ENCODE measurements at regions of chr10 and their contacts with region 1.

Region 1: DNA sequence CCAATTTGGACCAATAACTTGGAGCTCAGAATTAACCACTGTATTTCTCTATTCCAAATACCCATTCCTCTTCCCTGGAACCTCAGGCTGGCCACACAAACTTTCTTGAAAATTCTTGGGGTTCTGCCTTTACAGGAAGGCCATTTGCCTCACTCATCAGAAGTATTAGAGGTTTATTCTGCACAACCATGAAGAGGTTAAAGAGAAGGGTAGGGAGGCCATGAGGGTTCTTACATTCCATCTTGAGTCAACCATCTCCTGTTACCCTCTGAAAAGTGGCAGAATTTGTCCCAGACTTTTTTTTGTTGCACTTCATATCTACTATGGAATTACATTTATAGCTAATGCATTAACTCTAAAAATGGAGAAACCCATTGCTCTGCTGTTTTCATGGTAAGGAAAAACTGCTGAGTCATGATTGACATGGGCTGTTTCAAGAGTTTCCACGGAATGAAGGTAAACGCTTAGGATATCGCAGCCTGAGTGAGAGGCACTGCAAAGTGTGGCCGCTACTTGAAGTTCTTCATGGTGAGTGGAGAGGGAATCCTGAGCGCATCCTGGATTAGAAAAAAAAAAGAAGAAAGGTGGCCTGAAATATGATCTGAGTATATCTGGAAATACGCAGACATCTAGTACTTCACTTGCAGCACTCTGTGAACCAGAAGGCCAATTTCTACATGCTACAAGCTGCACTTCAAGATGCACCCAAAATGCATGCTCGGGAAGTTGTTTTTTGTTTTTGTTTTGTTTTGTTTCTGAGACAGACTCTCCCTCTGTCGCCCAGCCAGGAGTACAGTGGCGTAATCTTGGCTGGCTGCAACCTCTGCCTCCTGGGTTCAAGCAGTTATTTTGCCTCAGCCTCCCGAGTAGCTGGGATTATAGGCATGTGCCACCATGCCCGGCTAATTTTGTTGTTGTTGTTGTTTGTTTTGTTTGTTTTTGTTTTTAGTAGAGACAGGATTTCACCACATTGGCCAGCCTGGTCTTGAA is 83.7 kb downstream of the KIAA1217 start:
- DNase-seq: no peak
- ATAC-seq: no peak
- H3K4me3 ChIP-seq: no peak overlapping the region
- H3K27ac ChIP-seq: peak overlapping the region in 8 of 10 donors; percentile 34 to 73 (median 69)
- H3K4me1 ChIP-seq: peaks cover 4 to 42% (median 29%) of the 10 kb centered on the region in 9 donors
- H3K27me3 ChIP-seq: no peaks in the 10 kb centered on the region
- CTCF ChIP-seq: no peak

Region 2: GRCh38 chr10:24344279-24344678 is 51.7 kb after region 1 on chr10:
- intact Hi-C with region 1: loop called in 1 of 10 experiments (anchors 10 kb)
- DNase-seq: no peak
- ATAC-seq: peak in 2 of 8 donors; percentile 18 to 74
- H3K4me3 ChIP-seq: no peak overlapping the region
- H3K27ac ChIP-seq: peak overlapping the region in 7 of 10 donors; percentile 11 to 51 (median 33)
- H3K4me1 ChIP-seq: peaks cover 4 to 71% (median 36%) of the 10 kb centered on the region in 9 donors
- H3K27me3 ChIP-seq: no peaks in the 10 kb centered on the region
- CTCF ChIP-seq: no peak

Region 3: GRCh38 chr10:24669285-24669852 is 376.8 kb after region 1 on chr10:
- intact Hi-C with region 1: no loop called
- DNase-seq: no peak
- ATAC-seq: peak in 2 of 8 donors; percentile 41 to 68
- H3K4me3 ChIP-seq: no peak overlapping the region
- H3K27ac ChIP-seq: peak overlapping the region in 1 of 10 donors; percentile 20
- H3K4me1 ChIP-seq: peaks cover 0 to 30% (median 15%) of the 10 kb centered on the region in 9 donors
- H3K27me3 ChIP-seq: no peaks in the 10 kb centered on the region
- CTCF ChIP-seq: no peak

Region 4: GRCh38 chr10:24962995-24963394 is 670.4 kb after region 1 on chr10:
- intact Hi-C with region 1: no loop called
- DNase-seq: no peak
- ATAC-seq: no peak
- H3K4me3 ChIP-seq: no peak overlapping the region
- H3K27ac ChIP-seq: no peak overlapping the region
- H3K4me1 ChIP-seq: peaks cover 0 to 16% (median 13%) of the 10 kb centered on the region in 9 donors
- H3K27me3 ChIP-seq: no peaks in the 10 kb centered on the region
- CTCF ChIP-seq: no peak